ENCODE measurements at regions of chr16 and their contacts with region 1.

Region 1: DNA sequence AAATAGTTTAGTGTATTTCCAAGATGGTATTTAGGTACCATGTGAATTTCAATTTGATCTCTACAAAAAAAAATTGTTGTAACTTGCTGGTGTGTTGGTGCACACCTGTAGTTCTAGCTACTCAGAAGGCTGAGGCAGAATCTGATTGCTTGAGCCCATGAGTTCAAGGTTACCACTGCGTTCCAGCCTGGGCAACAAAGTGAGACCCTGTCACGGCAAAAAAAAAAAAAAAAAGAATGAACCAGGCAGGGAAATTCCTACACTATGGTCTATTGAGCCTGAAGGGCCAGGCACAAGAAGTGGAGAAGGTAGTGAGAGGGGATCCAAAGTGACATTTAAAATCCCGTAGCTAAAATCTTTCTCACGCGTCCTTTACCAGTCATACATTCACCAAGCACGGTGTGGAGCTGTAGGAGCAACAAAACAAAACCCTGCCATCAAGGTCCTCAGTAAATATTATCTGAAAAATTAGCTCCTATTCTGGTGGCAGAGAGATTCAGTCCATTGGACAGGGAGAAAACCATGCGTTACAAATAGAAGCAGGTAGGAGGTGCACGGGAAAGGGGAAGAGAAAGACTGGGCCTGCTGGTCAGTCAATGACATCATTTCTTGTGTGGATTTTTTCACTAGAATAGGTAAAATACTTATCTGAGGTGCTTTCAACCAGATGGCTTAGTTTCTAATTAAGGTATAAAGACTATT is 27.3 kb downstream of the TXNDC11 start:
- DNase-seq: no peak
- H3K4me3 Mint-ChIP-seq: no peak overlapping the region
- H3K27ac Mint-ChIP-seq: peak overlapping the region; percentile 13
- H3K4me1 Mint-ChIP-seq: peaks cover 16% of the 10 kb centered on the region
- H3K27me3 Mint-ChIP-seq: no peaks in the 10 kb centered on the region

Region 2: DNA sequence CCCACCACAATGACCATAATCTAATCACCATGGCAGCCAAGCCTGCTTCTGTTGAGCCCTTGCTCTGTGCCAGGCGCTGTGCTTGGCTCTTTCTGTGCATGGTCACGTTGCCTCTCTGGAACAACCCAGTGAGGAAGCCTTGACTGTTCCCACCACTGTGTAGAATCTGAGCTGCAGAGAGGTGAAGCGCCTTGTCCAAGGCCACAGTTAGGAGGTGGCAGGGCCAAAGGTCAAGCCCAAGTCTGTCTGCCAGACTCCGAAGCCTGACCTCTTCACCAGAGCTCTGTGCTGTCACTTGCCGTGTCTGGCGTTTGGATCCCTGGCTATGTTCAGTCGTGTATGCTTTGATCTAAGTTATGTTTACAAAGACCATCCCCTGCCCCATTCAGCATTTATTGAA is 760.5 kb before region 1 on chr16:
- intact Hi-C with region 1: loop called (anchors 2 kb)
- DNase-seq: no peak
- H3K4me3 Mint-ChIP-seq: peak overlapping the region; percentile 23
- H3K27ac Mint-ChIP-seq: no peak overlapping the region
- H3K4me1 Mint-ChIP-seq: peaks cover 28% of the 10 kb centered on the region
- H3K27me3 Mint-ChIP-seq: no peaks in the 10 kb centered on the region

Region 3: DNA sequence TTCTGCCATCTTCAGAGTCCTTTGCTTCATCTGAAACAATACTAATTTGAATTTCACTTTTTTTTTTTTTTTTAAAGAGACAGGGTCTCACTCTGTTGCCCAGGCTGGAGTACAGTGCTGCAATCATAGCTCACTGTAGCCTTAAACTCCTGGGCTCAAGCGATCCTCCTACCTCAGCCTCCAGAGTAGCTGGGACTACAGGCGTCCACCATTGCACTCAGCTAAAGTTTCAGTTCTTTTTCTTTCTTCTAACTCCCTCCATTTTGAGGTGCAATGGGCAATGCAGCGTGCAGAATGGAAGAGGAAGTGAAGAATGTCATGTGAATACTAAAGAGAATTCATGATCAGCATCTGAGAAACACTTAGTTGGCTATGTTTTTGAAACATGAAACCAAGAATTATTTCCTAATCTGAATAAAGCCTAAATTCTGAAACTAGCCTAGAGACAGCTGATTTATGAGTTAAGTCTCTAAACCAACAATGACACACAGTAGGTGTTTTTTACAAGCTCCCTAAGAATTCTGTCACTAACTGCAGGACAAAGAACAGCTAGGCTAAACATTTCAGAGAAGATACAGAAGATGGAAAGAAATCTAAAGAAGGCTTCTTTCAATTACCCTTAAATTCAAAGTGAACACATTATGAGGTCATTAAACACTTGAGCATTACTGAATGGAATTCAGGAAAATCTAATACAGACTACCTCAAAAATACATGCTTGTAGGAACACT is 26.2 kb before region 1 on chr16:
- intact Hi-C with region 1: loop called (anchors 2 kb)
- DNase-seq: no peak
- H3K4me3 Mint-ChIP-seq: no peak overlapping the region
- H3K27ac Mint-ChIP-seq: peak overlapping the region; percentile 6
- H3K4me1 Mint-ChIP-seq: peaks cover 26% of the 10 kb centered on the region
- H3K27me3 Mint-ChIP-seq: no peaks in the 10 kb centered on the region